ENCODE measurements at regions of chr12 and their contacts with region 1.

Region 1: DNA sequence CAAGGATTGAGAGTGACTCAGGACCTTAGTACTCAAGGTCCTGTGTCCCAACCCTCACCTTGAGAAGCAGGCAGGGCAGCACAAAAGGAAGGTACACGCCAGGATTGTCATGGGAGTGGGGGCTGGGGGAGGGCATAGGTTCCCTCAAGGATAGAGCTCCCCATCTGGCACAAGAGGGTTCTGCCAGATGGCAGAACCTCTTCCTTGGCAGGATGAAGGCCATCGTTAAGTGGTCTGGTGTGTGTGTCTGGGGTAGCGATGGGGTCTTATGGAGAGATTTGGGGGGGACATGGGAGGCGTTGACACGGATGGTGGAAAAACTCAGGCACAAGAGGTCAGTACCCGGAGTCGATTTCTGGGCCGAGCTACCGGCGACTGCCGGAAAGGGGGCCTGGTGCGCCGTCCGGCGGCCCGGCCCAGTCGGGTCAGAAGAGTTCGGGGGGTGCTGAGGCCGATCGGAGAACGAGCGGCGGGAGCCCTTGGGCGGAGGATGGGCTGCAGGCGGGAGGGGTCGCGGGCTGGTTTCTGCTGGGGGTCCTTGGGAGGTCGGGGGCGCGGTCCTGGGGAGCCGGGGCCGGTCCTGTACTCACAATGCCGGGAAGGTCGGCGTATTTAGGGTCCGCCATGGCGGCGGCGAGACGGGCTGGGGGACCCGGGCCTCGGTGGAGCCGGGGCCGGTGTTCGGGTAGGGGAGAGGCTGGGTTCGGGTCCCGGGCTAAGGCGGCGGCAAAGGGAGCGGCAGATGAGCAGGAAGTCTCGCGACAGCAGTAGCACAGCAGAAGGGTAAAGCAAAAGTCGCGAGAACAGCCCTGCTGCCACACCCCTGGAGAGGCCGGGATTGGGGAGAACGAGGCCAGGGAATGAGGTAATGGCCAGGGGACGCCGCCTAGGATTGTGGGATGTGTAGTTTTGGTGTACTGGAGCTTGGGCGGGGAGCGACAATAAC is at the start of gene DCTN2:
- DNase-seq: peak; percentile 93 to 99 (median 96)

Region 2: GRCh38 chr12:56863789-56864188 is 682.9 kb before region 1 on chr12:
- intact Hi-C with region 1: no loop called
- DNase-seq: no peak

Region 3: DNA sequence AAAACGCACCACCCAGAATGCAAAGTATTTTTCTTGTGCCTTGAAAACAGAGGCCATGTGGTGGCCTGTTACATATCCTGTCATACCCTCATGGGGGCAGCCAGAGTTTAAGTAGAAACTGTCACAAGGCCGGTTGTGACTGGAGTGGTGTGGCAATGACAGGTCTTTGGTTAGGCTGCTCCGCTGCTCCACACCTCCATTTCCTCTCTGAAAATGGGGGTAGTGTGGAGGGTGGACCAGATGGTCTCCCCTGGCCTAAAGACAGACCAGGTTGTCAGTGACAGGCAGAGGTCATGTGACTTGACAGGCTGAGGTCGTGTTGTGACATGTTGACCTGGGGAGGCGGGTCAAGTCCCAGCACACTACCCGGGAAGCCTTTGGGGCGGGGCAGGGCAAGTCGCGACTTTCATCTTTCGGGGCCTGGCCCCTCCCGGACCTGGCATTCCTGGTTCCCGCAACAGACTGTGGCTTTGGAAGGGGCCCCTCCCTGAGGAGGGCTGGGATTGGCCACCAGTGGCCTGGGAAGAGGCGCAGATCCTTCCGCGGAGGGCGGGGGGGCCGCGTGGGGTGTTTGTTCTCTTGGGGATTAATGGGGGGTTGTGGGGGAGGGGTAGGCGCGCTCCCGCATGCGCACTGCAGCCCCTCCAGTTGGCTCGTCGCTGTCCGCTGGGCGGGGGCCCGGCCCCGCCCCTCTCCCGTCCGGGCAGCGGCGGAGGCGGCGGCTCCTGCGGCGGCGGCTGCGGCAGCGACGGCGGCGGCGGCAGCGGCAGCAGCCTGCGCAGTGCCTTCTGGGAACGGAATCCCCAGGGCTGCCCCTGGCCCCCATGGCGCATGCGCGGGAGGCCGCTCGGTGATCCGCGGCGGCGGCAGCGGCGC is 24.5 kb before region 1 on chr12 and contains the start of gene MBD6:
- intact Hi-C with region 1: loop called (anchors 2 kb)
- DNase-seq: peak; percentile 87 to 99 (median 91)